ENCODE measurements at regions of chr3 and their contacts with region 1.

Region 1: DNA sequence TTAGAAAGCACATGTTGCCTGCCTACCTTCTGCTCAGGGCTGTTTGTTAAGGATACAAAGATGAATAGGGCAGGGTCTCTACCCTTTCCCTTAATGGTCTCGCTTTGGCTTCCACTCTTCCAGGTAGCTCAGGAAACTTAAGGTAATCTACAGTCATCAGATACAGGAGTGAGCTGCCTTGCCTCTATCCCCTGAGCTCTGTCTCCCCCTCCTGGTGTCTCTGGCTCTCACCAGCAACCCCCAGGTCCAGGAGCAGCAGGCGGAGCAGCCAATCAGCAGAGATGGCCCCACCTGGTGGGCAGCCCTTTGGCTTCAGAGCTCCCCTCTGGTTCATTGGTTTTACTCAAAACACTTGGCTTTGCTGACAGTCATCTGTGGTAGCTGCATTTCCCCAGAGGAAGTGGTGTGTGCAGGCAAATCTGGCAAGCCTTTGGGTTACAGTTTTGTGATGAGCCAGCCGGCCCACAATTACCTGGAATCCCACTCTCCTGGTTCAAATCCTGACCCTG is 8.5 kb upstream of the CX3CR1 start:
- DNase-seq: peak; percentile 75 to 91
- ATAC-seq: peak; percentile 94 to 98 (median 97)
- H3K4me3 ChIP-seq: no peak overlapping the region
- H3K4me3 Mint-ChIP-seq: no peak overlapping the region
- H3K27ac ChIP-seq: no peak overlapping the region
- H3K27ac Mint-ChIP-seq: peak overlapping the region; percentile 55 to 88
- H3K4me1 ChIP-seq: peaks cover 39% of the 10 kb centered on the region
- H3K4me1 Mint-ChIP-seq: peaks cover 24 to 47% of the 10 kb centered on the region in 2 donors
- H3K27me3 ChIP-seq: no peaks in the 10 kb centered on the region
- H3K27me3 Mint-ChIP-seq: no peaks in the 10 kb centered on the region
- CTCF ChIP-seq: peak; percentile 97

Region 2: DNA sequence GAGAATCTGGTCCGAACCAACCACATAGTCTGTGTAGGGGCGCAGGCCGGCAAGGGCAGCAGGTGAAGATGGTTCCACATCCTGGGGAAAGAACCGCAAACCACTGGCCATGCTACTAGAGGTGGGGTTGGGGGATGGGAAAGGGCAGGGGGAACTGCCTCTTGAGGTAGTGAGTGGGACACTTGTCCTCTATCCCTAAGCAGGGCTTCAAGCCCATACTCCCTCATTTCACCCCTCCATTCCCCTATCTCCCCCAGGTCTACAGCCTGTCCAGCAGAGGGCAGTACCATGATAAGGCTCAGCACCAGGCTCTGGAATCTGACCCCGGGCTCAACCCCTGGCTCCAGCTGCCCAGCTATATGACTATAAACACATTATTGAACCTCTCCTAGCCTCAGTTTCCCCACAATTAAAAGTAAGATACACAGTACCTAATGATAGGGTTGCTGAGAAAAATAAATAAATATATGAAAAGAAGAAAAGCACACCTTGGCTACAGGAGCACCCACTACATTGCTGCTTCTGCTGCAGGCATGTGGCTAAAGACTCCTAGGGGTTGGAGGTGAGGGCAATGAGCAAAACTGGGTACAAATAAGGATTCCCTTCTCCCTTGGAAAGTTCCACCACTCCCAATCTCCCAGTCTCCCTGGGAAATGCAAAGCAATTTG is 187.2 kb before region 1 on chr3:
- intact Hi-C with region 1: loop called (anchors 1 kb)
- DNase-seq: peak in 1 of 2 donors; percentile 78
- ATAC-seq: peak; percentile 63 to 90 (median 67)
- H3K4me3 ChIP-seq: no peak overlapping the region
- H3K4me3 Mint-ChIP-seq: no peak overlapping the region
- H3K27ac ChIP-seq: no peak overlapping the region
- H3K27ac Mint-ChIP-seq: no peak overlapping the region
- H3K4me1 ChIP-seq: peaks cover 5% of the 10 kb centered on the region
- H3K4me1 Mint-ChIP-seq: peaks cover 13 to 32% of the 10 kb centered on the region in 2 donors
- H3K27me3 ChIP-seq: no peaks in the 10 kb centered on the region
- H3K27me3 Mint-ChIP-seq: peaks cover 0 to 13% of the 10 kb centered on the region in 2 donors
- CTCF ChIP-seq: peak; percentile 59

Region 3: GRCh38 chr3:39189959-39190269 is 98.4 kb before region 1 on chr3:
- intact Hi-C with region 1: loop called (anchors 1 kb)
- DNase-seq: peak; percentile 61 to 85
- ATAC-seq: peak; percentile 73 to 89 (median 79)
- H3K4me3 ChIP-seq: no peak overlapping the region
- H3K4me3 Mint-ChIP-seq: no peak overlapping the region
- H3K27ac ChIP-seq: no peak overlapping the region
- H3K27ac Mint-ChIP-seq: peak overlapping the region in 1 of 2 donors; percentile 81
- H3K4me1 ChIP-seq: peaks cover 25% of the 10 kb centered on the region
- H3K4me1 Mint-ChIP-seq: peaks cover 20 to 37% of the 10 kb centered on the region in 2 donors
- H3K27me3 ChIP-seq: no peaks in the 10 kb centered on the region
- H3K27me3 Mint-ChIP-seq: no peaks in the 10 kb centered on the region
- CTCF ChIP-seq: peak; percentile 85

Measured in natural killer cell (primary cell).